HepG2 (cell line): ENCODE measurements at regions of chr9 and their contacts with region 1.

Region 1: GRCh38 chr9:77163884-77164283 is 13.4 kb upstream of the VPS13A start:
- DNase-seq: no peak
- ATAC-seq: no peak
- H3K4me3 ChIP-seq: no peak overlapping the region
- H3K27ac ChIP-seq: no peak overlapping the region
- H3K4me1 ChIP-seq: no peaks in the 10 kb centered on the region
- H3K27me3 ChIP-seq: no peaks in the 10 kb centered on the region
- CTCF ChIP-seq: no peak
- EP300 ChIP-seq: no peak
- POLR2A ChIP-seq: no peak
- RAD21 ChIP-seq: no peak

Region 2: GRCh38 chr9:77215874-77216273 is 52.0 kb after region 1 on chr9:
- CTCF ChIA-PET with region 1: no interaction called
- POLR2A ChIA-PET with region 1: no interaction called
- in situ Hi-C with region 1: no loop called
- intact Hi-C with region 1: loop called (anchors 1 kb)
- DNase-seq: peak; percentile 14
- ATAC-seq: peak; percentile 72; the same call in 2 of the 3 replicates
- H3K4me3 ChIP-seq: no peak overlapping the region
- H3K27ac ChIP-seq: no peak overlapping the region
- H3K4me1 ChIP-seq: peaks cover 6% of the 10 kb centered on the region; the same call in 1 of the 2 replicates
- H3K27me3 ChIP-seq: no peaks in the 10 kb centered on the region
- CTCF ChIP-seq: peak; percentile 30
- EP300 ChIP-seq: no peak
- POLR2A ChIP-seq: no peak
- RAD21 ChIP-seq: no peak